Heart right ventricle (tissue), 16 donors: ENCODE measurements at regions of chr2 and their contacts with region 1.

Region 1: DNA sequence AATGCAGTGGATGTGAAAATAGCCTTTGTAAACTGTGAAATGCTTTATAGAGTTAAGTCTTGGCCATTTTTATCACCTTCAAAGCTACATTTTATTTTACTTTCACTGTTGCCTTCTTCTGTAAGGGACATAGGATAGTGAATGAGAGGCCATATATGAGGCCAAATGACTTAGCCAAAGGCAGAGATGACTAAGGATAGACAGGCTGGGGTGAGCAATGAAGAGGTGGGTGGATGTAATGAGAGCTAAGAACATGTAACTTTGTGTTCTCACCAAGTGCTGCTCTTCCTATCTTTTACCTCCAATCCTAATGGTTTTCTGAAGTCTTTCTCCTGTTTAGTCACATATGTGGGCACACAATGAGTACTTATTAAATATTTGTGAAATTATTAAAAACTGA is 101.9 kb downstream of the MBD5 start:
- DNase-seq: no peak
- ATAC-seq: no peak
- H3K4me3 ChIP-seq: no peak overlapping the region
- H3K27ac ChIP-seq: no peak overlapping the region
- H3K4me1 ChIP-seq: no peaks in the 10 kb centered on the region
- H3K27me3 ChIP-seq: no peaks in the 10 kb centered on the region
- CTCF ChIP-seq: no peak

Region 2: DNA sequence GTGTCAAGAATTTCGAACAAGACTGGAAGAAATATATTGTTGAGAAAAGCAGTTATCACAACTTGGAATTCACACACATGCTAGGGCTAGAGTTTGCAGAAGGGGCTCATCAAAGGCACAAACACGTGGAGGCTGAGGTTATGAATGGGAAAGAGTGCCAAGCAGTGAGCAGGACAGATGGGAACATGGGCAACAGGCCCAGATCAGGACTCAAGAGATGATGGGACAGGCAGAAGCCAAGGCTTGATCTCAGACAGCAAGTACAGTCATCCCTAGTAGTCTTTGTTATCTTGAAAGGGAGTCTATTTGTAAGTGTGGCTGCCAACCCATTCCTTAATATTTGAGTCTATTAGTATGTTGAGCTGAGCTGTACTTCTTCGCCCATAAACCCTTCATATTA is 499.6 kb after region 1 on chr2:
- intact Hi-C with region 1: loop called in 1 of 10 experiments (anchors 5 kb)
- DNase-seq: no peak
- ATAC-seq: peak in 5 of 8 donors; percentile 50 to 67 (median 60)
- H3K4me3 ChIP-seq: no peak overlapping the region
- H3K27ac ChIP-seq: no peak overlapping the region
- H3K4me1 ChIP-seq: peaks cover 0 to 28% (median 4%) of the 10 kb centered on the region in 9 donors
- H3K27me3 ChIP-seq: no peaks in the 10 kb centered on the region
- CTCF ChIP-seq: no peak